ENCODE measurements at regions of chr2 and their contacts with region 1.

Region 1: DNA sequence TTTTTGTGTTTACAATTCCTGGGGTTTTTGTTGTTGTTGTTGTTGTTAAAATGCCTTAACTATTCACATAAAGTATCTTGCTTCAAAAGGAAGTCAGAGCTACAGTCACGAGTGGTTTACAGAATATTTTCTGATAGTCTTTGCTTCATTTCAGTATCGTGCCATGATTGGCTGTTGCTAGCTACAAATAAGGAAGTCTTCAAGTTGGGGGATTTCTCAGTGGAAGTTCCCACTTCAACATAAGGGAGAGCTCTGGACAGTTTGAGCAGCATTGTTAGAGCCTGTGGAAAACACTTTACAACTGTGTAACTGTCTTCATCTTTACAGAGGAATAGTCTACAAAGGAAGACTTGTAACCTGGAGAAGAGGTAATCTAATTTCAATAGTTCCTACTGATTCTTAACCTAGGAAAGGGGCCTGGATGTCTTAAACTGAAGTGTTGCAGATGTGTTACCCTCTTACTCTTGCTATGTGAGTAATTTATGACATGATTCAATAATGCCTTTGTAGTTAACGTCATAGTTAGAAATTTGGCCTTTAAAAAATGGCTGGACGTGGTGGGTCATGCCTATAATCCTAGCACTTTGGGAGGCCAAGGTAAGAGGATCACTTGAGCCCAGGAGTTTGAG is 23.4 kb upstream of the TANK start:
- DNase-seq: peak; percentile 90 to 98 (median 97)
- H3K4me3 ChIP-seq: peak overlapping the region; percentile 43 to 93 (median 77)
- H3K4me3 Mint-ChIP-seq: peak overlapping the region; percentile 72 to 89
- H3K27ac ChIP-seq: peak overlapping the region; percentile 88 to 100
- H3K27ac Mint-ChIP-seq: peak overlapping the region; percentile 96 to 99 (median 97)
- H3K4me1 ChIP-seq: peaks cover 47 to 73% of the 10 kb centered on the region in 2 donors
- H3K4me1 Mint-ChIP-seq: peaks cover 58% of the 10 kb centered on the region
- H3K27me3 ChIP-seq: no peaks in the 10 kb centered on the region
- H3K27me3 Mint-ChIP-seq: peaks cover 0 to 2% (median 1%) of the 10 kb centered on the region in 3 donors
- CTCF ChIP-seq: no peak

Region 2: GRCh38 chr2:161102770-161103450 is 33.9 kb before region 1 on chr2:
- intact Hi-C with region 1: no loop called
- DNase-seq: peak; percentile 18 to 57 (median 51)
- H3K4me3 ChIP-seq: no peak overlapping the region
- H3K4me3 Mint-ChIP-seq: no peak overlapping the region
- H3K27ac ChIP-seq: no peak overlapping the region
- H3K27ac Mint-ChIP-seq: peak overlapping the region in 3 of 7 donors; percentile 21 to 68 (median 58)
- H3K4me1 ChIP-seq: peaks cover 7 to 14% of the 10 kb centered on the region in 2 donors
- H3K4me1 Mint-ChIP-seq: peaks cover 16% of the 10 kb centered on the region
- H3K27me3 ChIP-seq: no peaks in the 10 kb centered on the region
- H3K27me3 Mint-ChIP-seq: no peaks in the 10 kb centered on the region
- CTCF ChIP-seq: no peak

Region 3: GRCh38 chr2:161160226-161161069 is 23.6 kb after region 1 on chr2 and contains the start of gene TANK:
- intact Hi-C with region 1: loop called in 1 of 2 experiments (anchors 2 kb)
- DNase-seq: peak; percentile 96 to 97 (median 97)
- H3K4me3 ChIP-seq: peak within 1 kb of the TSS; percentile 76 to 97 (median 94)
- H3K4me3 Mint-ChIP-seq: peak within 1 kb of the TSS; percentile 99 to 100
- H3K27ac ChIP-seq: peak within 1 kb of the TSS; percentile 99
- H3K27ac Mint-ChIP-seq: peak within 1 kb of the TSS; percentile 100
- H3K4me1 ChIP-seq: peaks cover 35 to 49% of the 10 kb centered on the region in 2 donors
- H3K4me1 Mint-ChIP-seq: peaks cover 37% of the 10 kb centered on the region
- H3K27me3 ChIP-seq: no peaks in the 10 kb centered on the region
- H3K27me3 Mint-ChIP-seq: no peaks in the 10 kb centered on the region
- CTCF ChIP-seq: no peak
- polyA plus RNA-seq, gene TANK: 72.7 to 91.7 (median 73.5) TPM

Region 4: GRCh38 chr2:161486111-161486510 is 349.3 kb after region 1 on chr2:
- intact Hi-C with region 1: no loop called
- DNase-seq: no peak
- H3K4me3 ChIP-seq: no peak overlapping the region
- H3K4me3 Mint-ChIP-seq: no peak overlapping the region
- H3K27ac ChIP-seq: no peak overlapping the region
- H3K27ac Mint-ChIP-seq: no peak overlapping the region
- H3K4me1 ChIP-seq: no peaks in the 10 kb centered on the region
- H3K4me1 Mint-ChIP-seq: no peaks in the 10 kb centered on the region
- H3K27me3 ChIP-seq: no peaks in the 10 kb centered on the region
- H3K27me3 Mint-ChIP-seq: peaks cover 0 to 2% (median 0%) of the 10 kb centered on the region in 3 donors
- CTCF ChIP-seq: no peak